Ascending aorta (tissue), 2 donors: ENCODE measurements at regions of chr20 and their contacts with region 1.

Region 1: DNA sequence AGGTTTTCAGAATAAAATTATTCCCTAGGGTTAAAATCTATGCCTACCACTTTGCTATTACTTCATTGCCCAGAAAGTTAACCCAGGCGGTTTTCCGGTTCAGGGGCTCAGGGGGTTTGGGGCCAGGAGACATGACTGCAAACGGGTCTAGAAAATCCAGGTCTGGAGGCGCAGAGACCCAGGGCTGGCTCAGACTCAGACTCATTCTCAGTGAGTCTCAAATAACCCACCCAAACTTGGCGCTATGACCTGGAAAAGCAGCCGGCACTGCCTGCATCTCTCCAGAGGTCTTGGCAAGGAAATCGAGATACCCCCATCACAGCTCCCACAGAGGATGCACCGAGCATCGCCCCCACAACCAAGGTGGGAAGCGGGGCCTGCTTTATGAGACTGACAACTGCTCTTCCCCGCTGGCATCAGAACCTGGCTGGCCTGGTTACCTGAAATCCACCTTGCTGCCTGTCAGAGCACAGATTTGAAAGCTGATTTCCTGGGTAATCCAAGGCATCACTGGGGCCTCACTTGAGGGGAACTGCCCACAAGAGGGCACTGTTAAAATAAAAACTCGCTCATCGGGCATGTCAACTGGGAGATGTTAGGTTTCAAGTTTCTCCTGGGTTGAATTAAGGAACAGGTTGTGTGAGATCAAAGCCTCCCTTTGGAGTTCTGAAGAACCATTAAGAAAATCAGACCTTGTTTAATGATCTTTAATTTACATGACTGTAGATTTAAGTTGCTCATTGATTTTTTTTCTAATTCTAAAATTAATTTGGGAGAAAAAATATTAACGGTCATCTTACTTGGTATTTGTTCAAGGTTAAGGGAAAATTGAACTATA is 55.1 kb downstream of the KIF16B start:
- DNase-seq: no peak
- H3K4me3 ChIP-seq: no peak overlapping the region
- H3K27ac ChIP-seq: no peak overlapping the region
- H3K4me1 ChIP-seq: no peaks in the 10 kb centered on the region
- H3K27me3 ChIP-seq: no peaks in the 10 kb centered on the region
- CTCF ChIP-seq: peak in 2 of 3 experiments; percentile 27 to 40

Region 2: GRCh38 chr20:16451982-16452381 is 66.2 kb before region 1 on chr20:
- intact Hi-C with region 1: no loop called
- DNase-seq: no peak
- H3K4me3 ChIP-seq: no peak overlapping the region
- H3K27ac ChIP-seq: no peak overlapping the region
- H3K4me1 ChIP-seq: no peaks in the 10 kb centered on the region
- H3K27me3 ChIP-seq: no peaks in the 10 kb centered on the region
- CTCF ChIP-seq: no peak

Region 3: DNA sequence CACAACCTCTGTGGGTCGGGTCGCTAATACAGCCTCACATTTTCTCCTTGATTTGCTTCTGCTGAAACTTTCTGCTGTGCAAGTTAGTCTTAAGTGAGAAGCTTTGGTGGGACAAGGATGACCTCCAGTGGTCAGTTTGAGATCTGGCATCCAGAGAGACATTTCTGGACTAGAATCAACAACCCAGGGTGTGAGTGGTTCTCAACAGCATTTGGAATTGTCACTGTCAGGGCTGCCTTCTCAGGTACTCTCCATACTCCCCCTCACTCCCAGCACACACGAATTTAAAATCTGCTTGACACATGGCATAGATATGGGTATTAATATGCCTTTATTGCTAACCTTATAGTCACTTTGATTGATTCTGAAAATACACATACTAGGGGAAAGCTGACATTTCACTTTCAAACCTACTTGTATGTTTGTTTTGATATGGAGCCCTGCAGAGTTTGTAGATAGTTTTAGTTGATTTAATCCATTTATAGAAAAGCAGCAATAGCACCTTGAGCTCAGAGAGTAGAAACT is 243.2 kb after region 1 on chr20:
- intact Hi-C with region 1: loop called (anchors 2 kb)
- DNase-seq: no peak
- H3K4me3 ChIP-seq: no peak overlapping the region
- H3K27ac ChIP-seq: no peak overlapping the region
- H3K4me1 ChIP-seq: no peaks in the 10 kb centered on the region
- H3K27me3 ChIP-seq: no peaks in the 10 kb centered on the region
- CTCF ChIP-seq: peak; percentile 31 to 63 (median 40)

Region 4: DNA sequence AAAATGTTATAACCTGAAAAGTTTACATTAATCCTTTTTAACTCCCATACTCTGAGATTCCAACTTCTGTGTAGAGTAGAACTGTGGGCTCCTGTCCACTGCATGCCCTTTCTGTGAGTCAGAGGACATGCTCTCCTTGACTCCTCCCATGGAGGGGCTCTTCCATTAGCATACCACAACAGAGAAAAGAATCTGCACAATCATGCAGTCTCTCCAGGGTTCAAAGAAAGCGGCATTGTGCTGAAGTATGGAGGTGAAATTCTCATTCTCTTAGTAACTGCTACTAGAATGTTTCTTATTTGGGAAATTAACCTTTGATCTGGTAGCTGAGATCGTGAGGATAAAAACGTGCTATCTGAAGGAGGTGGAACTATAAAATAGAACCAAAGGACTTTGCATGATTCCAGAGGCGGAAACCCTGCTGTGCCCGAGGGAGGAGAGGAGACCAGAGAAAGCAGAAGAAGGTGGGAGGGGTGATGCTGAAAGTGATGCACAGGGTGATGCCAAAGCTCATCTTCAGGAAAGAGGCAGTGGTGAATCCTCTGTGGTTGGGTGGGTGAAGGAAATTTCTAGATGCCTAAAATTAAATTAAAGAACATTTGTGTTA is 506.5 kb after region 1 on chr20:
- intact Hi-C with region 1: no loop called
- DNase-seq: no peak
- H3K4me3 ChIP-seq: no peak overlapping the region
- H3K27ac ChIP-seq: no peak overlapping the region
- H3K4me1 ChIP-seq: no peaks in the 10 kb centered on the region
- H3K27me3 ChIP-seq: no peaks in the 10 kb centered on the region
- CTCF ChIP-seq: no peak